CD4-positive, alpha-beta T cell (primary cell): ENCODE measurements at regions of chr14 and their contacts with region 1.

Region 1: DNA sequence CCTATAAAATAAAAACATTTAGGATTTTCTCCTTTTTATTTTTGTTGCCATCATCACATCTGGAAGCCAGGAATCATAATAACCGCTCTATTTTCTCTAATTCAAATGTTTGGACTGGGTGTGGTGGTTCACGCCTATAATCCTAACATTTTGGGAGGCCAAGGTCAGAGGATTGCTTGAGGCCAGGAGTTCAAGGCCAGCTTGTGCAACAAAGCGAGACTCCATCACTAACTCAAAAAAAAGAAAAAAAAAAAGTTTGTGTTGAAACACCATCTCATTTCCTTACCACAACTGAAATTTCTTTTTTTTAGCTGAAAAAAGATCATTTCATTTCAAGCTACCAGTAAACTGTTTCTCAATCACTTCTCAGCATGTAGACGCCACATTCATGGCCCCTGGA is 8.8 kb upstream of the BAZ1A start:
- DNase-seq: no peak
- ATAC-seq: no peak
- H3K4me3 ChIP-seq: no peak overlapping the region
- H3K4me3 Mint-ChIP-seq: no peak overlapping the region
- H3K27ac ChIP-seq: no peak overlapping the region
- H3K27ac Mint-ChIP-seq: no peak overlapping the region
- H3K4me1 ChIP-seq: no peaks in the 10 kb centered on the region
- H3K4me1 Mint-ChIP-seq: no peaks in the 10 kb centered on the region
- H3K27me3 ChIP-seq: no peaks in the 10 kb centered on the region
- H3K27me3 Mint-ChIP-seq: no peaks in the 10 kb centered on the region
- CTCF ChIP-seq: no peak

Region 2: GRCh38 chr14:34912178-34912577 is 28.2 kb after region 1 on chr14:
- CTCF ChIA-PET with region 1: no interaction called
- POLR2A ChIA-PET with region 1: no interaction called
- intact Hi-C with region 1: loop called in 1 of 2 experiments (anchors 5 kb)
- DNase-seq: peak in 2 of 14 experiments; percentile 18 to 24
- ATAC-seq: no peak
- H3K4me3 ChIP-seq: no peak overlapping the region
- H3K4me3 Mint-ChIP-seq: no peak overlapping the region
- H3K27ac ChIP-seq: no peak overlapping the region
- H3K27ac Mint-ChIP-seq: no peak overlapping the region
- H3K4me1 ChIP-seq: no peaks in the 10 kb centered on the region
- H3K4me1 Mint-ChIP-seq: no peaks in the 10 kb centered on the region
- H3K27me3 ChIP-seq: no peaks in the 10 kb centered on the region
- H3K27me3 Mint-ChIP-seq: no peaks in the 10 kb centered on the region
- CTCF ChIP-seq: peak; percentile 19